Activated T-helper 1 cell treated with anti-CD3 and anti-CD28 coated beads, Interleukin-12 subunit alpha, Interleukin-12 subunit beta, Interleukin-2, Interleukin-4 antibody, amounts not matched to agents 30 ng/mL and 10 ng/mL and 1 ng/mL, durations not matched to agents 14 hours and 24 hours and 36 hours (primary cell): ENCODE measurements at regions of chr16 and their contacts with region 1.

Region 1: DNA sequence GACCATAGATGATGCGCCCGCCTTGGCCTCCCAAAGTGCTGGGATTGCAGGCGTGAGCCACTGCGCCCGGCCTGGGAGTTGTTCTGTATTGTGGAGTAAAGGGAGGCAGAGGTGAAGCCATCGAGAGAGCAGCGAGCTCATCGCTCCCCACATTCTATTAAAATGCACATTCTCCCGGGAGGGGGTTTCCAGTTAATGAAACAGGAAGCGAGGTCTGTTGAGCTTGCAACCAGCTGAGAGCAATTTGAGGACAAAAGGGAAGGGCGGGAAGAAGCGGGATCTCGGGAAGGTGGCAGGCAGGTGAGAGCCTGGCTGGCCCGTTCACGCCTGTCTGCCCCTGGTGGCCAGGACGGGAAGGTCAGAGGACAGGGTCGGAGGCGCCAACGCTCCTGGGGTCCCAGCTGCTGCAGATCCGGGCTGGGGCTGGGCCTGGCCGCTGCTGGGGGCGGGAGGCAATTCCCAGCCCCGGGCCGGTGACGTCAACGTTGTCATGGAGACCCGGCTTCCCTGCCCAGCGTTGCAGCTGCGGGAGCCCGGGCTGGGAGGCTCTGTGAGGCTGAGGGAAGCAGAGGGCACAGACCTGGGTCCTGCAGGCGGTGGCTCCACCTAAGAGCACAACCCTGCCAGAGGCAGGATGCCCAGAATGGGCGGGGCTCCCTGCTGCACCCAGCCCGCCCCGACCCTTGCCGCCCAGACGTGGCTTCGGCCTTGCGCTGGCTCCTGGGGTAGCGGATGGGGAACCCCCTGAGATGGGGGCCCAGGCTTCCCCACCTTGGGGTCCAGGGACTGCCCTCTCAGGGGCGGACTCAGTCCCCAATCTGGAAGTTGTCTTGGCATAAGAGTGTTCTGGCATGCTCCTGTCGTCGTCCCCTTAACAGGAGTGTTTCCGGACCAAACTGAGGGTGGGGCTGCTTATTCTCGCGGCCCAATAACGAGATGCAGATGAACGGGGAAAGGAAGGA is 48.7 kb upstream of the PLCG2 start:
- DNase-seq: peak; percentile 46
- H3K4me3 Mint-ChIP-seq: peak overlapping the region; percentile 82
- H3K27ac Mint-ChIP-seq: peak overlapping the region; percentile 92
- H3K4me1 Mint-ChIP-seq: peaks cover 16% of the 10 kb centered on the region
- H3K27me3 Mint-ChIP-seq: peaks cover 6% of the 10 kb centered on the region

Region 2: GRCh38 chr16:81095953-81096717 is 634.2 kb before region 1 on chr16 and contains the start of gene GCSH:
- intact Hi-C with region 1: loop called (anchors 2 kb)
- DNase-seq: peak; percentile 99
- H3K4me3 Mint-ChIP-seq: peak within 1 kb of the TSS; percentile 81
- H3K27ac Mint-ChIP-seq: peak within 1 kb of the TSS; percentile 46
- H3K4me1 Mint-ChIP-seq: peaks cover 6% of the 10 kb centered on the region
- H3K27me3 Mint-ChIP-seq: peaks cover 3% of the 10 kb centered on the region
- total RNA-seq, gene GCSH: 16.5 and 19.1 TPM in 2 replicates

Region 3: GRCh38 chr16:81623363-81624102 is 106.8 kb before region 1 on chr16:
- intact Hi-C with region 1: no loop called
- DNase-seq: peak; percentile 42
- H3K4me3 Mint-ChIP-seq: no peak overlapping the region
- H3K27ac Mint-ChIP-seq: peak overlapping the region; percentile 70
- H3K4me1 Mint-ChIP-seq: peaks cover 25% of the 10 kb centered on the region
- H3K27me3 Mint-ChIP-seq: no peaks in the 10 kb centered on the region